ENCODE measurements at regions of chr19 and their contacts with region 1.

Region 1: GRCh38 chr19:10036601-10037071 is 23.4 kb downstream of the RDH8 start:
- DNase-seq: peak; percentile 22
- H3K4me3 Mint-ChIP-seq: no peak overlapping the region
- H3K27ac Mint-ChIP-seq: peak overlapping the region; percentile 47
- H3K4me1 Mint-ChIP-seq: peaks cover 24% of the 10 kb centered on the region
- H3K27me3 Mint-ChIP-seq: peaks cover 24% of the 10 kb centered on the region
- CTCF ChIP-seq: no peak

Region 2: GRCh38 chr19:10074153-10074552 is 37.5 kb after region 1 on chr19:
- CTCF ChIA-PET with region 1: no interaction called
- intact Hi-C with region 1: loop called (anchors 5 kb)
- DNase-seq: peak; percentile 22
- H3K4me3 Mint-ChIP-seq: no peak overlapping the region
- H3K27ac Mint-ChIP-seq: no peak overlapping the region
- H3K4me1 Mint-ChIP-seq: peaks cover 5% of the 10 kb centered on the region
- H3K27me3 Mint-ChIP-seq: peaks cover 21% of the 10 kb centered on the region
- CTCF ChIP-seq: peak; percentile 19

Region 3: GRCh38 chr19:10112895-10113591 is 76.4 kb after region 1 on chr19:
- CTCF ChIA-PET with region 1: interaction called, 3 read pairs
- intact Hi-C with region 1: loop called (anchors 5 kb)
- DNase-seq: peak; percentile 69
- H3K4me3 Mint-ChIP-seq: no peak overlapping the region
- H3K27ac Mint-ChIP-seq: peak overlapping the region; percentile 69
- H3K4me1 Mint-ChIP-seq: peaks cover 11% of the 10 kb centered on the region
- H3K27me3 Mint-ChIP-seq: no peaks in the 10 kb centered on the region
- CTCF ChIP-seq: peak; percentile 35